Naive thymus-derived CD4-positive, alpha-beta T cell (primary cell): ENCODE measurements at regions of chr6 and their contacts with region 1.

Region 1: DNA sequence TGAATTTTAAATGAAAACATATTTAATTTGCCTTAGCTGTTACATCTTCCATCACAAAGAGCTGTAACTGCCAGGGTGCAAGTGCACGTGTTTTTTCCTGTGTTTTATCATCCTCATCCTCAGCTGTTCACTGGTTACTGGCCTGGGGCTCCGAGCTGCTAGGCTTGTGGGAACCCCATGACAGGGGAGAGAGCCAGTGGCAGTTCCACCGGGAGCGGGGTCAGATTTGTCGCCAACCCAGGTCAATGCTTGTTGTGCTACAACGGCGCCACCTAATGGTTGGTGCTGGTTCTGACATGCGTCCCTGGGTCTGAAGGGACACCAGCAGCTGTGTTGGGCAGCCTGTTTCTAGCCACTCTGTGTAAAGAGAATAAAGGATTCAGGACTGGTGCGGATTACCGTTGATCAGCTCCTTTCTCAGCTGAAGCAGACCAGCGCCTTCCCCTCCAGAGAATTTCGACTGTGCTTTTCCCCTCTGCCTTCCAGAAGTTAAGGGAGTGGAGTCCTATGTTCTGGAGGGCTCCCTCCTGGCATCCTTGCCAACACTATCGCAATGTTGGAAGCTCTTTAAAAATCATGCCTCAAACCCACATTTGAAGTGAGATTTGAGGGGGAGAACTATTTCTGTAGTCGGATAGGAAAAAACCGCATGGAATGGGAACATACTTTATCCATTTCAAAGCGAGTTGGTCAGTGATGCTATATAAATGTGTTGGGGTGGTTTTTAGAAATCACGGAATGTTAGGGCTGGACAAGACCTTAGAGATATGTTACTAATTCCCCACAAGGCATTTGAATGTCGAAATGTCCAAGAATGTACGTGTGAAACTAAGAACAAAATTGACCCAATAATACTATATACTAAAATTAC is 32.1 kb downstream of the SUMO4 start:
- DNase-seq: peak; percentile 63 to 89 (median 78)
- ATAC-seq: peak; percentile 92
- H3K4me3 ChIP-seq: peak overlapping the region; percentile 44
- H3K4me3 Mint-ChIP-seq: peak overlapping the region; percentile 35 to 84 (median 72)
- H3K27ac ChIP-seq: no peak overlapping the region
- H3K27ac Mint-ChIP-seq: peak overlapping the region in 5 of 9 donors; percentile 25 to 86 (median 67)
- H3K4me1 ChIP-seq: no peaks in the 10 kb centered on the region
- H3K4me1 Mint-ChIP-seq: peaks cover 0 to 20% (median 4%) of the 10 kb centered on the region in 7 donors
- H3K27me3 ChIP-seq: no peaks in the 10 kb centered on the region
- H3K27me3 Mint-ChIP-seq: no peaks in the 10 kb centered on the region

Region 2: GRCh38 chr6:148578245-148578732 is 853.9 kb before region 1 on chr6:
- CTCF ChIA-PET with region 1: no interaction called
- POLR2A ChIA-PET with region 1: no interaction called
- intact Hi-C with region 1: loop called in 1 of 2 experiments (anchors 5 kb)
- DNase-seq: peak in 2 of 9 donors; percentile 13 to 31
- ATAC-seq: peak; percentile 90
- H3K4me3 ChIP-seq: no peak overlapping the region
- H3K4me3 Mint-ChIP-seq: no peak overlapping the region
- H3K27ac ChIP-seq: no peak overlapping the region
- H3K27ac Mint-ChIP-seq: no peak overlapping the region
- H3K4me1 ChIP-seq: no peaks in the 10 kb centered on the region
- H3K4me1 Mint-ChIP-seq: peaks cover 0 to 2% (median 0%) of the 10 kb centered on the region in 7 donors
- H3K27me3 ChIP-seq: no peaks in the 10 kb centered on the region
- H3K27me3 Mint-ChIP-seq: peaks cover 27 to 47% (median 35%) of the 10 kb centered on the region in 5 donors

Region 3: DNA sequence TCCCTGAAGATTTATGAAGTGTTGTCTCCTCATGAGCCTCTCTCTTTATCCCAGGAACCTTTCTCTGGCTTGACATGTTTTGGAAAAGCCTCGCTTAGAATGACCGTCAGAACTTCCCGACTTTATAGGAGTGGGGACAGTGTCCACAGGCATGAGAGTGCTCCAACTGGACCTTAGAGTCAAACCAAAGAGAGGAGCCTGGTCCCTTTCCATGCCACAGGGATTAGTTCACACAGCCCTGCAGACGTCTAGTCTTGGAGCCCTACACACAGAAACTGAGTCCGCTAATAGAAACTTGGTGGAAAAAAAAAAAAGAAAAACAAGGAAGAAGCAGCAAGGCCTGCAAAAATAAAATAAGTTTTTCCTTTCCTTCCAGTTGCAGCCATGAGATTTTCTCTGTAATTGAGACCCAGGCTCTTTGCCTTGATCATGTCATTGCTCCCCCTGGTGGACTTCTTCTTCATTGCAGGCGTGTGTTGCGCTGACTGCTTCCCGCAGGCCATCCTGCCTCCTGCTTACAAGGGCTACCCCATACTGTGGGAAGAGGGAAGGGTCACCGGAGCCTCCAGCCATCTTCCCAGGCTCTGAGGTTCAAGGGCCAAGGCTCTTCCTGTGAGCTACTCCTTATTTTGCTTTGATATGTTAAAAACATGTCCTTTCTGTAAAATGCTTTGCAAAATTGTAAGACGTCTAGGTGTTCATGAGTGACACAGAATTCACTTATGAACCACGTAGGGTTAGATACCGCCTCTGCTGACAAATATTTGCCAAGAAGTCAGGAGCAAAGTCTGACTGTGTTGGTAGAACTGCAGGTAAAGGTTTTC is 484.3 kb before region 1 on chr6:
- CTCF ChIA-PET with region 1: no interaction called
- POLR2A ChIA-PET with region 1: no interaction called
- intact Hi-C with region 1: loop called in 1 of 2 experiments (anchors 5 kb)
- DNase-seq: peak; percentile 39 to 78 (median 59)
- ATAC-seq: peak; percentile 90
- H3K4me3 ChIP-seq: no peak overlapping the region
- H3K4me3 Mint-ChIP-seq: no peak overlapping the region
- H3K27ac ChIP-seq: no peak overlapping the region
- H3K27ac Mint-ChIP-seq: peak overlapping the region in 1 of 9 donors; percentile 41
- H3K4me1 ChIP-seq: no peaks in the 10 kb centered on the region
- H3K4me1 Mint-ChIP-seq: peaks cover 0 to 5% (median 0%) of the 10 kb centered on the region in 7 donors
- H3K27me3 ChIP-seq: no peaks in the 10 kb centered on the region
- H3K27me3 Mint-ChIP-seq: peaks cover 5 to 30% (median 13%) of the 10 kb centered on the region in 5 donors

Region 4: GRCh38 chr6:149082286-149082707 is 349.8 kb before region 1 on chr6:
- CTCF ChIA-PET with region 1: interaction called, 55 read pairs
- POLR2A ChIA-PET with region 1: interaction called, 8 read pairs
- intact Hi-C with region 1: loop called (anchors 1 kb)
- DNase-seq: peak; percentile 59 to 84 (median 76)
- ATAC-seq: peak; percentile 97
- H3K4me3 ChIP-seq: no peak overlapping the region
- H3K4me3 Mint-ChIP-seq: peak overlapping the region in 2 of 10 donors; percentile 18 to 72
- H3K27ac ChIP-seq: no peak overlapping the region
- H3K27ac Mint-ChIP-seq: peak overlapping the region in 5 of 9 donors; percentile 4 to 90 (median 52)
- H3K4me1 ChIP-seq: peaks cover 16 to 25% of the 10 kb centered on the region in 2 donors
- H3K4me1 Mint-ChIP-seq: peaks cover 10 to 88% (median 39%) of the 10 kb centered on the region in 7 donors
- H3K27me3 ChIP-seq: no peaks in the 10 kb centered on the region
- H3K27me3 Mint-ChIP-seq: no peaks in the 10 kb centered on the region

Region 5: GRCh38 chr6:149147938-149148718 is 284.0 kb before region 1 on chr6:
- CTCF ChIA-PET with region 1: no interaction called
- POLR2A ChIA-PET with region 1: interaction called, 10 read pairs
- intact Hi-C with region 1: no loop called
- DNase-seq: peak in 7 of 9 donors; percentile 31 to 82 (median 56)
- ATAC-seq: peak; percentile 91
- H3K4me3 ChIP-seq: no peak overlapping the region
- H3K4me3 Mint-ChIP-seq: peak overlapping the region in 7 of 10 donors; percentile 7 to 69 (median 54)
- H3K27ac ChIP-seq: peak overlapping the region; percentile 64
- H3K27ac Mint-ChIP-seq: peak overlapping the region; percentile 80 to 97 (median 85)
- H3K4me1 ChIP-seq: peaks cover 26 to 29% of the 10 kb centered on the region in 2 donors
- H3K4me1 Mint-ChIP-seq: peaks cover 35 to 88% (median 55%) of the 10 kb centered on the region in 7 donors
- H3K27me3 ChIP-seq: no peaks in the 10 kb centered on the region
- H3K27me3 Mint-ChIP-seq: no peaks in the 10 kb centered on the region

Region 6: GRCh38 chr6:149362289-149362688 is 69.9 kb before region 1 on chr6:
- CTCF ChIA-PET with region 1: no interaction called
- POLR2A ChIA-PET with region 1: no interaction called
- intact Hi-C with region 1: no loop called
- DNase-seq: no peak
- ATAC-seq: no peak
- H3K4me3 ChIP-seq: no peak overlapping the region
- H3K4me3 Mint-ChIP-seq: peak overlapping the region in 3 of 10 donors; percentile 1 to 45 (median 16)
- H3K27ac ChIP-seq: no peak overlapping the region
- H3K27ac Mint-ChIP-seq: peak overlapping the region in 6 of 9 donors; percentile 25 to 89 (median 62)
- H3K4me1 ChIP-seq: peaks cover 28 to 44% of the 10 kb centered on the region in 2 donors
- H3K4me1 Mint-ChIP-seq: peaks cover 25 to 76% (median 52%) of the 10 kb centered on the region in 7 donors
- H3K27me3 ChIP-seq: no peaks in the 10 kb centered on the region
- H3K27me3 Mint-ChIP-seq: no peaks in the 10 kb centered on the region

Region 7: GRCh38 chr6:149419696-149420404 is 12.3 kb before region 1 on chr6:
- CTCF ChIA-PET with region 1: interaction called, 14 read pairs
- POLR2A ChIA-PET with region 1: no interaction called
- intact Hi-C with region 1: no loop called
- DNase-seq: no peak
- ATAC-seq: no peak
- H3K4me3 ChIP-seq: no peak overlapping the region
- H3K4me3 Mint-ChIP-seq: no peak overlapping the region
- H3K27ac ChIP-seq: no peak overlapping the region
- H3K27ac Mint-ChIP-seq: peak overlapping the region in 3 of 9 donors; percentile 2 to 67 (median 59)
- H3K4me1 ChIP-seq: no peaks in the 10 kb centered on the region
- H3K4me1 Mint-ChIP-seq: peaks cover 0 to 29% (median 2%) of the 10 kb centered on the region in 7 donors
- H3K27me3 ChIP-seq: no peaks in the 10 kb centered on the region
- H3K27me3 Mint-ChIP-seq: no peaks in the 10 kb centered on the region